GM18951 (cell line): ENCODE measurements at regions of chr2 and their contacts with region 1.

Region 1: GRCh38 chr2:200471324-200471848 is 38.5 kb downstream of the KCTD18 start:
- POLR2A ChIP-seq: no peak

Region 2: GRCh38 chr2:200193791-200194190 is 277.6 kb before region 1 on chr2:
- in situ Hi-C with region 1: no loop called
- POLR2A ChIP-seq: no peak

Region 3: GRCh38 chr2:200306196-200306930 is 165.0 kb before region 1 on chr2 and contains the start of gene SPATS2L:
- in situ Hi-C with region 1: loop called (anchors 10 kb)
- POLR2A ChIP-seq: peak; percentile 59